ENCODE measurements at regions of chr10 and their contacts with region 1.

Region 1: DNA sequence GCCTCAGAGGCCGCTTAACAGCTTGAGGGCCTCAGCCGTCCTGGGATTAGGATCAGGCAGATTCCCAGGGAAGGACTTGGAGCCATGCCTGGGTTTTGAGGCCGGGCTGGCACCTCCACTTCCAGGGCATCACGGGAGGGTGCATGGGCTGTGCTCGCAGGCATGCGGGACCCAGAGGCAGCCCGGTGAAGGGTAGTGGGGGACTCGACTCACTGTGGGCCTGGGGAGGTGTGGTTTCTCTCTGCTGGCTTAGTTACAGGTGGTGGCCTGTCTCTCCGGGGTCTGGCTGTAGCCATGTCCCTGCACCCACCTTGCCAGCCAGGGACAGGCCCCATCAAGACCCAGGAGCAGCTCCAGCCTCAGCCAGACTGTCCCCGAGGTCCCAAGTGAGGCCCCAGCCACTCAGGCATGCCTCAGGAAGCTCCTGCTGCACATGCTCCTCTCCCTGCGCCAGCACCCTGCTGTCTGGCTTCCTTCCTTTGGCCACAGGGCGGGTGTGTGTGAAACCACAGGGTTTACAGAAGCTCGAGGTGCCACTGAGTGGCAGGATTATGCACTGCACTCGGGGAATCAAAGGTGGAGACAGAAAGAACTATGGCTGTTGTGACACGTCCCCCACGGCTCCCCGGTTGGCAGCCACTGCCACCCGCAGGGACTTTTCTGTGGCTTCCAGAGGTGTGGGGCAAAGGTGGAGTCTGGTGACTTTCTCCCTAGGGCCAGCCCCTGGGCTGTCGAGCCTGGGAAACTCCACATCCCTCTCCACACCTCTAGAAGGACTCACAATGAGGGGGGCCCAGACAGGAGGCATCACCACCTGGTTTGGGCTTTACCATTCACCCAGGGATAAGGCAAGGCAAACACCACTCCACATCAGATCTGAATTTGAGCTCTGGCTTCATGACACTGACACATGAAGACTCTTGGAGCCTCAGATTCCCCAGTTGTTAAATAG is 19.7 kb downstream of the GOLGA7B start:
- DNase-seq: peak; percentile 89 to 98
- ATAC-seq: peak; percentile 97 to 99
- H3K4me3 ChIP-seq: no peak overlapping the region
- H3K27ac ChIP-seq: peak overlapping the region; percentile 77 to 89
- H3K4me1 ChIP-seq: peaks cover 12% of the 10 kb centered on the region
- CTCF ChIP-seq: peak; percentile 89
- EP300 ChIP-seq: no peak
- POLR2A ChIP-seq: peak; percentile 38; the same call in 1 of the 2 replicates
- RAD21 ChIP-seq: peak; percentile 98

Region 2: DNA sequence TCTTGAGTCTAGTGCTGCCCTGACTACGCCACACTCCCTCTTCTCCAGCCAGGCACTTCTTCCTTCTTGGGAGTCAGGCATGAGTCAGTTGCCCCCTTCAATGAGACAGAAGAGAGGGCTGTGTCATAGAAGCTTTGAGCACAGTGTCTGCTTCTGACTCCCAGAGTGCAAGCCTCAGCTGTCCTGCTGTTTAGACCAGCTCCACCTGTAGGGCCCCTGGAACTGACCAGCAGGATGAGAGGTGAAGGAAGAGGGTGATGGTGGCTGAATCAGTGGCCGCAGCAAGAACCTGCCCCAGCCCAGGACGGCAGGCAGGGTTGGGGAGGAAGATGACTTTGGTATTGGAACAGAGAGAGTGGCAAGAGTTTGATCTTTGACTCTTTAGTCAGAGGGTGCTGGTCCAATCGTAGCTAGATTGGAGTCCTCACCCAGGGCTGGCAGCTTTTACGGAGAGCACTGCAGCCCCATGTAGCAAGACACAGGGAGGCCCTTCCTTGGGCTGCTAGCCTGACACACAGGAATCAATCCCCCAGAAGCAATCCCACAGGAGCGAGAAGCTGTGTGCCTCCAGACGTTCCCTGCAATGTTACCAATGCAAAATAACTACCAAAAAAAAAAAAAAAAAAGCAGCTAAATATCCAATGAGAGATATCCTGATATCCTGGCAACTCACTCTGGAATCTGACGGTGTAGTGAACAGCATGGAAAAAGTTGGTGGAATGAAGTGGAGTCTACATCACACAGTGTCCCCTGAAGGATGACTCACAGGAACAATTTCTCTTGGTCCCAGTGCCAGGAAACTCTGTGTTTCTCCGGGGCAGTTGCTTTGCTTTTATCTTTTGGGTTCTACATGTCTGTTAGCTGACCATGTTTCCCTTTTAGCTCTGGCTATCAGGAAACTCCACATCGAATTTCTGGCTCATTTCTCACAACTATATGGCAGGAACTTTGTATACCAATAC is 273.0 kb before region 1 on chr10:
- CTCF ChIA-PET with region 1: no interaction called
- POLR2A ChIA-PET with region 1: no interaction called
- DNase-seq: peak; percentile 68 to 73
- ATAC-seq: peak; percentile 90 to 91
- H3K4me3 ChIP-seq: no peak overlapping the region
- H3K27ac ChIP-seq: peak overlapping the region; percentile 76 to 88
- H3K4me1 ChIP-seq: peaks cover 30% of the 10 kb centered on the region
- CTCF ChIP-seq: no peak
- EP300 ChIP-seq: no peak
- POLR2A ChIP-seq: no peak
- RAD21 ChIP-seq: no peak

Region 3: GRCh38 chr10:97743169-97743943 is 126.0 kb before region 1 on chr10:
- CTCF ChIA-PET with region 1: interaction called, 18 read pairs
- POLR2A ChIA-PET with region 1: no interaction called
- DNase-seq: no peak
- ATAC-seq: peak in 1 of 2 experiments; percentile 37; a peak in 3 of 6 replicates
- H3K4me3 ChIP-seq: no peak overlapping the region
- H3K27ac ChIP-seq: no peak overlapping the region
- H3K4me1 ChIP-seq: peaks cover 3% of the 10 kb centered on the region; the same call in 2 of the 3 replicates
- CTCF ChIP-seq: no peak
- EP300 ChIP-seq: no peak
- POLR2A ChIP-seq: no peak
- RAD21 ChIP-seq: no peak

Region 4: DNA sequence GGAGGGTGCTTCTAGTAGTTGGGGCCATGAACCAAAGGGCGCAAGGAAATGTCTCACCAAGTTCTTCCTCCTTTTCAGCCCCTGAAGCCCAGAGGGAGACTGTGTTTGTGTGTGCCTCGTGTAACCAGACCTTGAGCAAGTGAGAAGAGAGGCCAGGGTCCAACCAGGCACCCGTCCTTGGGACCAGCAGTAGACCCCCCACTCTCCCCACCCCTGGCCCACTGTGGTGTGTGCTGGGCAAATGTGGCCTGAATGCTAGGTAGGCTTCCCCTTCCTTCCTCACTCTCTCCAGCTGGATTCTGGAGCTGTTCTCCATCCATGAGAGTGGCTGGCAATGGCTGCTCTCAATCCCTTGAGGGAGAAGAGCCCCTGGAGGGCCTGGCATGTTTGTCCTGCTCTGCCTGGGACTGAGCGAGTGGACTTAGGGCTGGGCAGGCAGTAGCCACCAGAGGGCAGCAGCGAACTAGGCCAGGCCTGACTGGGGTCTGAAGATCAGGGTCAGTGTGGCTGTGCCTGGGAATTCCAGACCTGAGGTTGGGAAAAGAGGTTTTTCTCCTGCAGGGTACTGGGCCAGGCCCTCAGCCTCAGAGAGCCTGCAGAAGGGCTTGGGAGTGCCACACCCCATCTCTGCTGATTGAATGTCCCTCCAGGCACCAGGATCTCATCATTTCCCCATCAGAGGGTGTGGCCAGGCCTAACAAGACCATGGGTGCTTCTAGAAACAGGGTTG is 110.0 kb before region 1 on chr10:
- CTCF ChIA-PET with region 1: interaction called, 75 read pairs
- POLR2A ChIA-PET with region 1: no interaction called
- DNase-seq: peak; percentile 80 to 94
- ATAC-seq: peak; percentile 82 to 96
- H3K4me3 ChIP-seq: no peak overlapping the region
- H3K27ac ChIP-seq: no peak overlapping the region
- H3K4me1 ChIP-seq: no peaks in the 10 kb centered on the region
- CTCF ChIP-seq: peak; percentile 87
- EP300 ChIP-seq: no peak
- POLR2A ChIP-seq: no peak
- RAD21 ChIP-seq: peak; percentile 87 to 92

Region 5: GRCh38 chr10:97780841-97781617 is 88.3 kb before region 1 on chr10:
- CTCF ChIA-PET with region 1: interaction called, 649 read pairs
- POLR2A ChIA-PET with region 1: no interaction called
- DNase-seq: no peak
- ATAC-seq: peak; percentile 45 to 57; a peak in 4 of 6 replicates
- H3K4me3 ChIP-seq: no peak overlapping the region
- H3K27ac ChIP-seq: peak overlapping the region in 1 of 2 experiments; percentile 27; a peak in 1 of 6 replicates
- H3K4me1 ChIP-seq: no peaks in the 10 kb centered on the region
- CTCF ChIP-seq: no peak
- EP300 ChIP-seq: no peak
- POLR2A ChIP-seq: no peak
- RAD21 ChIP-seq: no peak

Region 6: DNA sequence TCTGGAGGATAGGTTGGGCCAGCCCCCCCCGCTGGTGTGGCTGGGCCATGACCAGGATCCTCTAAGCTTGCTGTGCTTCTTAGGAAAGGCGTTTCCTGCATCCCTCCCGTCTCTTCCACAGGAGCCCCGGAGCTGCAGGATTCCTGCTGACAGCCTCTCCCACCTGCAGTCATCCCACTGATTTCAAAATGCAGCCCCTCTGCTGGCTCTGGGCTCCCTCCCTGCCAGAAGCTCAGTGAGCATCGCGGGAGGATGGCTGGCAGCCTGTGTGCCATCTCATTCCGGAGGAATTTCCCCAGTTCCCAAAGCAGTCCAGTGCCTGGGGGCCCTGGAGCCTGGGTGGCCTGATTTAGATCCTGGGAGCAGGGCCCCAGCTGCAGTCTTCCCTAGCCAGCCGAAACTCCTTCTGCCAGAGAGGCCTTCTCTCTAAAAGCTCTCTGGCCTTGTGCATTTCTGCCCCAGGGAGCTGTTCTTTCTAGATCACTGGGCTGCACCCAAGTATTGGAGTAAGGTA is 41.5 kb before region 1 on chr10:
- CTCF ChIA-PET with region 1: interaction called, 22 read pairs
- POLR2A ChIA-PET with region 1: no interaction called
- DNase-seq: no peak
- ATAC-seq: peak; percentile 40 to 67; a peak in 3 of 6 replicates
- H3K4me3 ChIP-seq: no peak overlapping the region
- H3K27ac ChIP-seq: peak overlapping the region in 1 of 2 experiments; percentile 68; a peak in 3 of 6 replicates
- H3K4me1 ChIP-seq: peaks cover 22% of the 10 kb centered on the region
- CTCF ChIP-seq: no peak
- EP300 ChIP-seq: no peak
- POLR2A ChIP-seq: no peak
- RAD21 ChIP-seq: no peak

Region 7: GRCh38 chr10:97849687-97850402 is 19.5 kb before region 1 on chr10 and contains the start of gene GOLGA7B:
- CTCF ChIA-PET with region 1: interaction called, 35 read pairs
- POLR2A ChIA-PET with region 1: interaction called, 3 read pairs
- DNase-seq: peak in 1 of 2 experiments; percentile 60
- ATAC-seq: peak; percentile 84 to 86
- H3K4me3 ChIP-seq: peak within 1 kb of the TSS; percentile 84
- H3K27ac ChIP-seq: peak within 1 kb of the TSS; percentile 76 to 83
- H3K4me1 ChIP-seq: peaks cover 6% of the 10 kb centered on the region; the same call in 2 of the 3 replicates
- CTCF ChIP-seq: no peak
- EP300 ChIP-seq: no peak
- POLR2A ChIP-seq: no peak
- RAD21 ChIP-seq: no peak
- polyA plus RNA-seq, gene GOLGA7B: 0.62 and 1.1 TPM in 2 replicates

Region 8: GRCh38 chr10:97974526-97975525 is 105.5 kb after region 1 on chr10:
- CTCF ChIA-PET with region 1: no interaction called
- POLR2A ChIA-PET with region 1: no interaction called
- DNase-seq: no peak
- ATAC-seq: no peak
- H3K4me3 ChIP-seq: no peak overlapping the region
- H3K27ac ChIP-seq: no peak overlapping the region
- H3K4me1 ChIP-seq: no peaks in the 10 kb centered on the region
- CTCF ChIP-seq: no peak
- EP300 ChIP-seq: no peak
- POLR2A ChIP-seq: no peak
- RAD21 ChIP-seq: no peak

Region 9: GRCh38 chr10:98045785-98046389 is 176.5 kb after region 1 on chr10:
- CTCF ChIA-PET with region 1: interaction called, 40 read pairs
- POLR2A ChIA-PET with region 1: no interaction called
- DNase-seq: peak; percentile 74 to 76
- ATAC-seq: peak; percentile 55 to 88; a peak in 5 of 6 replicates
- H3K4me3 ChIP-seq: no peak overlapping the region
- H3K27ac ChIP-seq: no peak overlapping the region
- H3K4me1 ChIP-seq: no peaks in the 10 kb centered on the region
- CTCF ChIP-seq: peak; percentile 82
- EP300 ChIP-seq: no peak
- POLR2A ChIP-seq: no peak
- RAD21 ChIP-seq: peak; percentile 56 to 66; a peak in 4 of 5 replicates